WTC11 (cell line): ENCODE measurements at regions of chr18 and their contacts with region 1.

Region 1: DNA sequence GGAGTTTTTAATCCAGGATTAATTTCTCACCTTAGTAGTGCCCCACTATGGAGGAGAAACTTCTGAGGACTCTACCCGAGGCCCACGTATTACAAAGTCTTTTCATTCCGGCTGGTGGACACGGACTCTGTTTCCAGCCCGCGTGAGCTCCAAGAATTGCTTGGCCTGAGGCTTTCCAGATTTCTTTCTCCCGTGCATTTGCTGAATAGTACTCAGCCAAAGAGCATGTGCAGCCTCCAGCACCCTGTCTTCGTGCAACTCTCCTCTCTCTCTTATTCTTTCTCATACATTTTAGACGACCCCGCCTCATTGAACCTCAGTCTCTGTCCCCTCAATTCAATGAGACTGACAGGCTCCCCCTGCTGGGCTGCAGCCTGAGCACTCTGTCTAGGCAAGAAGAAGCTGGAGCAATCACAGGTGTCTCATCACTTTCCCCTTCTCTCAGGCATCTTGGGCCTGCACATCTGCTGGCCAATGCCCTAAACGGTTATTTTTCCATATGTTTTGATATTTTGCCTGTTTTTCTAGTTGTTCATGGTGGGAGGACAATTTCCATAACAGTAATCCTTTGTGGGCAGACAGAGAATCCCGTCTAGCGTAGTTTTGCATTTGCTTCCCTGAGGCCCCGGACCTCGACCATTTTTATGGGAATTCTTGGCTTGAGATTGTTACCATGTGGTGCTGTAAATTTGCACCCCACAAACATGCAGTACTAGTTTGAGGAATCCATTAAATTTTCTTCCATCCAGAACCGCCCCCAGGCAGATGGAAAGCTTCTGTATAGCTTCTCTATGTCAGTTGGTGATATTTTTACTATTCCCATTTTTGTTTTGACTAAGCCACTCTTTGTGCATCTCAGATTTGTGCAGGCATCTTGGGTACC is 50.1 kb upstream of the LPIN2 start:
- DNase-seq: peak; percentile 80
- ATAC-seq: peak; percentile 95
- H3K4me3 Mint-ChIP-seq: no peak overlapping the region
- H3K27ac Mint-ChIP-seq: no peak overlapping the region
- H3K4me1 Mint-ChIP-seq: peaks cover 12% of the 10 kb centered on the region
- H3K27me3 Mint-ChIP-seq: no peaks in the 10 kb centered on the region
- CTCF ChIP-seq: peak; percentile 17; the same call in 1 of the 2 replicates

Region 2: GRCh38 chr18:2898186-2898640 is 164.8 kb before region 1 on chr18:
- CTCF ChIA-PET with region 1: no interaction called
- POLR2A ChIA-PET with region 1: no interaction called
- DNase-seq: no peak
- ATAC-seq: peak; percentile 63
- H3K4me3 Mint-ChIP-seq: no peak overlapping the region
- H3K27ac Mint-ChIP-seq: no peak overlapping the region
- H3K4me1 Mint-ChIP-seq: peaks cover 22% of the 10 kb centered on the region
- H3K27me3 Mint-ChIP-seq: no peaks in the 10 kb centered on the region
- CTCF ChIP-seq: no peak

Region 3: GRCh38 chr18:3074087-3074486 is 11.0 kb after region 1 on chr18:
- CTCF ChIA-PET with region 1: interaction called, 25 read pairs
- POLR2A ChIA-PET with region 1: interaction called, 3 read pairs
- DNase-seq: no peak
- ATAC-seq: no peak
- H3K4me3 Mint-ChIP-seq: no peak overlapping the region
- H3K27ac Mint-ChIP-seq: no peak overlapping the region
- H3K4me1 Mint-ChIP-seq: peaks cover 30% of the 10 kb centered on the region
- H3K27me3 Mint-ChIP-seq: no peaks in the 10 kb centered on the region
- CTCF ChIP-seq: no peak

Region 4: DNA sequence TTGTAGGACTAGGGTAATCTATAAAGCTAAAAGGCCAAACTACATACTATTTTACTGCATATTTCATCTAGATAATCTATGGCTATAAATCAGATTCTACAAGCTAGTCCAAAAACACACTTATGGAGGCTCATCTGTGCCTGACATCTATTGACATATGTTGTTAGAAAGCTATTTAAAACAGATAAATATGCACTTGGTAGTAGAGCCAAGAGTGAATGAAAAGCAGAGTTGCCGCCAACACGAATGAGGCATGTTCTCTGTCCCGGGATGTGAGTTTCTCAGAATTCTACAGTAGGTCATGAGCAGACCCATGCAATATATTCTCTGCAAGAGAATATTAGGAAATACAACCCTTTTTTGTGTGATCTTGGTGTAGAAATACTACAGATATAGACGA is 16.6 kb after region 1 on chr18:
- CTCF ChIA-PET with region 1: interaction called, 25 read pairs
- POLR2A ChIA-PET with region 1: interaction called, 3 read pairs
- DNase-seq: no peak
- ATAC-seq: no peak
- H3K4me3 Mint-ChIP-seq: no peak overlapping the region
- H3K27ac Mint-ChIP-seq: no peak overlapping the region
- H3K4me1 Mint-ChIP-seq: peaks cover 25% of the 10 kb centered on the region
- H3K27me3 Mint-ChIP-seq: no peaks in the 10 kb centered on the region
- CTCF ChIP-seq: no peak

Region 5: DNA sequence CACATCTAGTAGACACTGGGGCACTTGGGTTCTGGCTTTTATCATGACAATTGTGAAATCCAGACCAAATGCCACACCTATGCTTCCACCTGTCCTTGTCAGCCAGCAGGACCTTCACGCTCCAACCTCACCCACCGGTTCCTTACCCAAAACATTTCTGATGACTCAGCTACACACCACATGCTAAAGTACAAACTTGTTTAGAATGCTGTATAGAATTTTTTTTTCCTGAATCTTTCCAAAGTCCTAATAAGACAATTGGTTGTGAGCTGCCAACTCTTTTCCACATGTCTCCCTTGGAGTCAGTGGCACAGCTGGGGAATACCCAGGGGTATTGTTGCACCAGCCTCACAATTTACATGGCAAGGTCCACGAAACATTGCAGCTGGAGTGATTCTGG is 25.4 kb after region 1 on chr18:
- CTCF ChIA-PET with region 1: interaction called, 15 read pairs
- POLR2A ChIA-PET with region 1: no interaction called
- DNase-seq: no peak
- ATAC-seq: no peak
- H3K4me3 Mint-ChIP-seq: no peak overlapping the region
- H3K27ac Mint-ChIP-seq: no peak overlapping the region
- H3K4me1 Mint-ChIP-seq: peaks cover 42% of the 10 kb centered on the region
- H3K27me3 Mint-ChIP-seq: no peaks in the 10 kb centered on the region
- CTCF ChIP-seq: no peak